ENCODE measurements at regions of chr10 and their contacts with region 1.

Region 1: DNA sequence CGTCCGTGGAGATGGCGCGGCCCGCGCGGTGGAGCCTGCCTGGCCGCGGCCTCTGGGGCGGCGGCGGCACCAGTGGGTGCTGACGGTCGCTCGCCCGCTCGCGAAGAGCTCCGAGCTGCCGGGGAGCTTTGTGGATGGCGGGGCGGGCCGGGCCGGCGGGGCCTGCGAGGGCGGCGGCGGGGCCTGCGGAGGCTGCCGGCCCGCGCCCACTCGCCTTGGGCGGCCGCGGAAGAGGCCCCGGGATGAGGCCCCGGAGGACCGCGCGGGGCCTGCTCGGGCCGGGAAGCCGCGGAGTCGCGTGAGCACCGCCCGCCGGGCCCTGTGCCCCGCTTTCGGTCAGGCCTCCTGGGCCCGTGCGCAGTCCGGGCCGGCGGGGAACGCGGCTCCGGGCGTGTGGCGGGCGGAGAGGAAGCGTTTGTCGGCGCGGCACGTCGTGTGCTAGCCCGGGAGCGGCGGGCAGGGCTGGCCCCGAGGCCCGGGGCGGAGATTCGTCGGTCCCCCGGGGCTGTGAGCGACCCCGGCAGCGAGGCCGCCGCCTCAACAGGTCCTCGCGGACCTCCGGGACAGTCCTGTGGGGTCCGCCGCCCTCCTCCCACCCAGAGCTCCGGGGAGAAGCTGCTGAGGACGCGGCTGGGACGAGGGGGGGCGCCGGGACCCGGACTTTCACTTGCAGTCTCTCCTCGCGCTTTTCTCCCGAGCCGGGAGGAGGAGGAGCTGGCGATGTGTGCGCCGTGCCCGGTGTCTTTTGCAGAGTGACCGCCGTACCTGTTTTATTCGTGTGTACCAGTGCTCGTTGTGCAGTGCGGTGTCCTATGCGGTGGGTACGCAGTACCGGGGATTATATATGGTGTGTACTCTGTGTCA is 578 bp downstream of the ZMYND11 start:
- DNase-seq: peak; percentile 58 to 72 (median 66)
- H3K4me3 ChIP-seq: peak overlapping the region; percentile 51 to 52
- H3K4me3 Mint-ChIP-seq: peak overlapping the region; percentile 89 to 96 (median 92)
- H3K27ac ChIP-seq: peak overlapping the region; percentile 80
- H3K27ac Mint-ChIP-seq: peak overlapping the region; percentile 90 to 96 (median 93)
- H3K4me1 ChIP-seq: peaks cover 32% of the 10 kb centered on the region
- H3K4me1 Mint-ChIP-seq: peaks cover 29 to 47% (median 38%) of the 10 kb centered on the region in 4 donors
- H3K27me3 ChIP-seq: no peaks in the 10 kb centered on the region
- H3K27me3 Mint-ChIP-seq: no peaks in the 10 kb centered on the region

Region 2: GRCh38 chr10:79532-80215 is 56.2 kb before region 1 on chr10:
- CTCF ChIA-PET with region 1: no interaction called
- POLR2A ChIA-PET with region 1: no interaction called
- intact Hi-C with region 1: loop called (anchors 2 kb)
- DNase-seq: no peak
- H3K4me3 ChIP-seq: no peak overlapping the region
- H3K4me3 Mint-ChIP-seq: no peak overlapping the region
- H3K27ac ChIP-seq: no peak overlapping the region
- H3K27ac Mint-ChIP-seq: peak overlapping the region in 1 of 7 donors; percentile 8
- H3K4me1 ChIP-seq: no peaks in the 10 kb centered on the region
- H3K4me1 Mint-ChIP-seq: peaks cover 0 to 4% (median 0%) of the 10 kb centered on the region in 4 donors
- H3K27me3 ChIP-seq: no peaks in the 10 kb centered on the region
- H3K27me3 Mint-ChIP-seq: peaks cover 10 to 15% of the 10 kb centered on the region in 2 donors

Measured in CD4-positive, alpha-beta memory T cell (primary cell).